ENCODE measurements at regions of chr17 and their contacts with region 1.

Region 1: GRCh38 chr17:19362277-19363113 is at the start of gene B9D1:
- DNase-seq: peak; percentile 93
- ATAC-seq: peak; percentile 89
- H3K4me3 Mint-ChIP-seq: peak within 1 kb of the TSS; percentile 79
- H3K27ac Mint-ChIP-seq: peak within 1 kb of the TSS; percentile 70
- H3K4me1 Mint-ChIP-seq: peaks cover 11% of the 10 kb centered on the region
- H3K27me3 Mint-ChIP-seq: peaks cover 34% of the 10 kb centered on the region
- total RNA-seq, gene B9D1: 1.1 TPM

Region 2: GRCh38 chr17:19299866-19300265 is 62.6 kb before region 1 on chr17:
- CTCF ChIA-PET with region 1: no interaction called
- POLR2A ChIA-PET with region 1: no interaction called
- DNase-seq: no peak
- ATAC-seq: no peak
- H3K4me3 Mint-ChIP-seq: no peak overlapping the region
- H3K27ac Mint-ChIP-seq: no peak overlapping the region
- H3K4me1 Mint-ChIP-seq: peaks cover 11% of the 10 kb centered on the region
- H3K27me3 Mint-ChIP-seq: peaks cover 10% of the 10 kb centered on the region

Region 3: GRCh38 chr17:19377602-19378392 is 15.3 kb after region 1 on chr17:
- CTCF ChIA-PET with region 1: interaction called, 61 read pairs
- POLR2A ChIA-PET with region 1: interaction called, 5 read pairs
- DNase-seq: peak; percentile 98
- ATAC-seq: peak; percentile 97
- H3K4me3 Mint-ChIP-seq: peak overlapping the region; percentile 97
- H3K27ac Mint-ChIP-seq: peak overlapping the region; percentile 96
- H3K4me1 Mint-ChIP-seq: peaks cover 25% of the 10 kb centered on the region
- H3K27me3 Mint-ChIP-seq: peaks cover 10% of the 10 kb centered on the region

Region 4: GRCh38 chr17:19424934-19425868 is 62.7 kb after region 1 on chr17:
- CTCF ChIA-PET with region 1: interaction called, 11 read pairs
- POLR2A ChIA-PET with region 1: no interaction called
- DNase-seq: no peak
- ATAC-seq: no peak
- H3K4me3 Mint-ChIP-seq: no peak overlapping the region
- H3K27ac Mint-ChIP-seq: no peak overlapping the region
- H3K4me1 Mint-ChIP-seq: no peaks in the 10 kb centered on the region
- H3K27me3 Mint-ChIP-seq: peaks cover 20% of the 10 kb centered on the region

Region 5: DNA sequence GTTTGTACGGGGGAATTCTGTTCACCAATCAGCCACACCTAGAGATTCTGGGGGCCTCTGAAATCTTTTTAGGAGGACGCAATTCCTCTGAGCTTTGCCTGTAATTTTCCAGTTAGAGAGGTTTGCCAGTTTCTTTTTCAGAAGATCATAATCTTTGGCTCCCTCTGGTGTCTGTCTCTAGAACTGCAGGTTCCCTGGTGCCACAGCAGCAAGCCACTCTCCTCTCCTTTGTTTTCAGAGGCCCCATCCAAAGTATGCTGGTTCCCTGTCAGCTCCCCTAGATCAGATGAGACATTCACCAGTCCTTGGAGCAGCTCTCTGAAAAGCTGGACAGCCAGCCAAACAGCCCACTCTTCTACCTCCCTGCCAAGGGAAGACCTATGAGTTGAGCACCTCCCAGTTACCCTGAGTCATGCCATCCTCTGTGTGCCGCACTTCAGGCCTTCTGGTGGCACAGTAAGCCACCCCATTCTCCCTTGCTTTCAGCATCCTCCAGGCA is 84.6 kb after region 1 on chr17:
- CTCF ChIA-PET with region 1: interaction called, 86 read pairs
- POLR2A ChIA-PET with region 1: interaction called, 3 read pairs
- DNase-seq: peak; percentile 78
- ATAC-seq: peak; percentile 44
- H3K4me3 Mint-ChIP-seq: no peak overlapping the region
- H3K27ac Mint-ChIP-seq: no peak overlapping the region
- H3K4me1 Mint-ChIP-seq: peaks cover 3% of the 10 kb centered on the region
- H3K27me3 Mint-ChIP-seq: peaks cover 22% of the 10 kb centered on the region

Region 6: DNA sequence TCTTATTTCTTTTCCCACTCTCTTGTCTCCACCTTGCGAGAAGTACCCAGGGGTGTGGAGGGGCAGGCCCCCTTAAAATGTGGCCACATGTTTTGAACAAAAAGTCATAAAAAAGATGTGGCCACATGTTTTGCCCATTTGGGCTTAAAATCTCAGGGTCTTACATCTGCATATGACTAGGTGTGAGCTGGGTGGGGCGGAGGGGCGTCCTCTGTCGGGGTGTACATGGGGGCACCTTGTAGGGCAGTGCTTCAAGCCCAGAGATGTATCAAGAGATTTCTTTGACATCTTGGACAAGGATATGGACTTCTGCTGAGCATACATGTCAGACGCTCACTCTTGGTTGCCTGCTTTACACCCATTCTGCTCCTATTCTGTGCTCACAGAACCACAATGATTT is 158.1 kb after region 1 on chr17:
- CTCF ChIA-PET with region 1: no interaction called
- POLR2A ChIA-PET with region 1: no interaction called
- DNase-seq: no peak
- ATAC-seq: no peak
- H3K4me3 Mint-ChIP-seq: no peak overlapping the region
- H3K27ac Mint-ChIP-seq: no peak overlapping the region
- H3K4me1 Mint-ChIP-seq: no peaks in the 10 kb centered on the region
- H3K27me3 Mint-ChIP-seq: peaks cover 21% of the 10 kb centered on the region

Region 7: DNA sequence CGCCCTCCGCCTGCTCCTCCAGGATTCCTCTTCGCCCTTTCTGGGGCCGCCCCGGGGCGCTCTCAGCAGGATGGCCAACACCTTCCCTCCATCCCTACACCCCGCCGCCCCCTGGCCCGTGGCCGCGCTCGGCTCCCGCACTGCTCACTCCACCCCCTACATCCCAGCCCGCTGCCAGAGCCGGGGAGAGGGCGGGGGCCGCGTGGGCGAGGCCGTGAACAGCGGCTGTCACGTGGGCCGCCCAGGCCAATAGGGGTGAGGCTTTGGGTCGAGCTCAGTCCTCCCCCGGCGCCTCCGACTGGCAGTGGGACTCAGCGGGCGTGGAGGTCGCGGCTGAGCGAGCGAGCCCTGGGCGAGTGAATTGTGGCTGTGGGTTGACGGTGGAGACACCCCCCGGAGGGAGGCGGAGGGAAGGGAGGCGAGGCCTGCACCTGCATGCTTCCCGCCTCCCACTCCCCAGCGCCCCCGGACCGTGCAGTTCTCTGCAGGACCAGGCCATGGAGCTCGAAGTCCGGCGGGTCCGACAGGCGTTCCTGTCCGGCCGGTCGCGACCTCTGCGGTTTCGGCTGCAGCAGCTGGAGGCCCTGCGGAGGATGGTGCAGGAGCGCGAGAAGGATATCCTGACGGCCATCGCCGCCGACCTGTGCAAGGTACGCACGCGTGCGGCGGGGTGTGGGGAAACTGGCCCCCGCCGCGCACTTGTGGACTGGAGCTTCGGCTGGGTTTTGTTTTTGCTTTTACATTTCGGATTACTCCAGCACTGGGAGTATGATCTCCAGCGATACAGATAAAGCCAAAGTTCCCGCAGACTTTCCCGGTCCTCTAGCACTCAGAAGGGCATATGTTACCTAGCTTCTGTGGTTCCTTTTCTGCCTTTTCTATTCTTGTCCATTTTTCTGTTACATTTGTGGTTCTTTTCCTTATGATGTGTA is 286.2 kb after region 1 on chr17 and contains the start of gene ALDH3A2:
- CTCF ChIA-PET with region 1: interaction called, 16 read pairs
- POLR2A ChIA-PET with region 1: no interaction called
- DNase-seq: peak; percentile 95
- ATAC-seq: peak; percentile 98
- H3K4me3 Mint-ChIP-seq: peak within 1 kb of the TSS; percentile 84
- H3K27ac Mint-ChIP-seq: peak within 1 kb of the TSS; percentile 92
- H3K4me1 Mint-ChIP-seq: peaks cover 40% of the 10 kb centered on the region
- H3K27me3 Mint-ChIP-seq: peaks cover 6% of the 10 kb centered on the region
- total RNA-seq, gene ALDH3A2: 25.1 to 27.4 TPM